Psoas muscle (tissue), 8 donors: ENCODE measurements at regions of chr5 and their contacts with region 1.

Region 1: DNA sequence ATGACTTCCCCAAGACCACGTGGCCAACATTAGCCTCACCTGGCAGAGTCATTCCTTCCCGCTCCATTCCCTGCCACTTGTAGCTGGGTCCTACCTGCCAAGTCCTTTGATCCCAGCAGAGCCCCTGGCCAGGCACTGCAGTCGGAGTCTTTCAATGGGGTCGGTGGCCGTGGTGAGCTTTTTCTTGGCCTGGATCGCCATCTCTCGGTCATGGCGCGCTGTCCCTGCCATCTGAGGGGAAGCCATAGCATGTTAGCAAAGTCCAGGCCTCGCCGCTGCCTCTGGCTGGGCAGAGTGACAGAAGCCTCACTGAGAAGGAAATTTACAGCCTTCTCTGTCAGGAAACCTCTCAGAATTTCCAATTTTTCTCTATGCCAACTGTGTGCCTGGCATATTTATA is 17.5 kb downstream of the CAPSL start:
- DNase-seq: no peak
- ATAC-seq: no peak
- H3K4me3 ChIP-seq: no peak overlapping the region
- H3K27ac ChIP-seq: no peak overlapping the region
- H3K4me1 ChIP-seq: no peaks in the 10 kb centered on the region
- H3K27me3 ChIP-seq: peaks cover 0 to 33% (median 5%) of the 10 kb centered on the region in 3 donors
- CTCF ChIP-seq: no peak

Region 2: GRCh38 chr5:35089334-35090314 is 831.3 kb before region 1 on chr5:
- intact Hi-C with region 1: loop called in 1 of 2 experiments (anchors 2 kb)
- DNase-seq: no peak
- ATAC-seq: no peak
- H3K4me3 ChIP-seq: no peak overlapping the region
- H3K27ac ChIP-seq: no peak overlapping the region
- H3K4me1 ChIP-seq: no peaks in the 10 kb centered on the region
- H3K27me3 ChIP-seq: no peaks in the 10 kb centered on the region
- CTCF ChIP-seq: peak; percentile 42

Region 3: GRCh38 chr5:35963381-35963843 is 42.5 kb after region 1 on chr5:
- intact Hi-C with region 1: no loop called
- DNase-seq: no peak
- ATAC-seq: peak in 2 of 4 donors; percentile 66 to 71
- H3K4me3 ChIP-seq: peak overlapping the region; percentile 29
- H3K27ac ChIP-seq: no peak overlapping the region
- H3K4me1 ChIP-seq: no peaks in the 10 kb centered on the region
- H3K27me3 ChIP-seq: no peaks in the 10 kb centered on the region
- CTCF ChIP-seq: peak; percentile 73

Region 4: DNA sequence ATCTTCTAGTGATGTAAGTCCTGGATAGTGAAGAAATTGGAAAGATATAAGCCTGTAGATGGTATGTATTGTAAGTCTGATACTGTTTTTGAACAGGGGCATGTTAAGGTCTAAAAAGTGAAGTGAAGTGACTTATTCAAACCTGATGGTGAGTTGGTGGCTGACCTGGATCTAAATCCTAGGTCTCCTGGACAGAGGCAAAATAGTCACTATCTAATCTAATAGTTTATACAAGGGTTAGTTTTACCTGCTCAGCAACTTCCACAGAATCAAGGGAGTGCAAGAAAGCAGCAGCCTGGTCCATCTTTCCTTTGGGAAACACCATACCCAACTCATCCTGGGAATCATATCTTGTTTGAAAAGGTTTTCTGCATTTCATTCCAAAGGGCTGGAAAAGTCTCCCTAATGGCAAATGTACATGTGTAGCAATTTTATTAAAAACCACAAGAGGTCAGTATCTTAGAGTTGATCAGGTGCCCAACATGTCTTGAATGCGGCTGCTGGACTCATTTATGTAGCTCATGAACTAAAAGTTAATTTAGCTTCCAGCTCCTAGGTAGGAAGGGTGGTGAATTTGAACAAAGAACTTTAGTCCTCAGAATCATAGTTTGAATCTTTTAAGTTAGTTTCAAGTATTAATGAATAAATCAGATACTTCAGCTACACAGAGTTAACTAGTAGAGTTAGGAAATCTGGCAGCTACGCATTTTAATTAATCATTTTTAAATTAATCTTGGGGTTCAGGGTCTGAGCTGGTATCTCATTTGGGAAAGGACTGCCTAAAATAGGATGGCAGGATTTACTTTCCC is 257.0 kb after region 1 on chr5:
- intact Hi-C with region 1: no loop called
- DNase-seq: no peak
- ATAC-seq: peak in 2 of 4 donors; percentile 50 to 79
- H3K4me3 ChIP-seq: no peak overlapping the region
- H3K27ac ChIP-seq: no peak overlapping the region
- H3K4me1 ChIP-seq: no peaks in the 10 kb centered on the region
- H3K27me3 ChIP-seq: no peaks in the 10 kb centered on the region
- CTCF ChIP-seq: peak; percentile 53